Activated CD4-positive, alpha-beta T cell treated with anti-CD3 and anti-CD28 coated beads, Interleukin-2, amount 10 ng/mL, durations not matched to agents 7 days and 5 days (primary cell): ENCODE measurements at regions of chr6 and their contacts with region 1.

Region 1: DNA sequence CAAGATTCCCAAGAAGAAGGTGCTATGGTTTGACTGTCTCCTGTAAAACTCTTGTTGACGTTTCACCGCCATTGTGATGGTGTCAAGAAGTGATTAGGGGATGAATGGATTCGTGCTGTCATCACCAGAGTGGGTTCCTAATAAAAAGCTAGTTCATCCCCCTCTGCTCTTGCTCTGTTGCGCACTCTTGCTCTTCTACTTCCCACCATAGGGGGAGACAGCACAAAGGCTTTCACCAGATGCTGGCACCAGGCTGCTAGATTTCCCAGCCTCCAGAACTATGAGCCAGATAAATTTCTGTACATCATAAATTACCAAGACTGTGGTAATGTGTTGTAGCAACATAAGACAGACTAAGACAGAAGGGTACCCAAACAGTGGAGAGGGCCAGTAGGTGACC is 21.6 kb upstream of the CCDC28A start:
- DNase-seq: no peak
- H3K4me3 Mint-ChIP-seq: no peak overlapping the region
- H3K27ac Mint-ChIP-seq: no peak overlapping the region
- H3K4me1 Mint-ChIP-seq: no peaks in the 10 kb centered on the region
- H3K27me3 Mint-ChIP-seq: no peaks in the 10 kb centered on the region

Region 2: GRCh38 chr6:136866872-136867416 is 1885.1 kb before region 1 on chr6:
- CTCF ChIA-PET with region 1: interaction called, 10 read pairs
- POLR2A ChIA-PET with region 1: no interaction called
- DNase-seq: no peak
- H3K4me3 Mint-ChIP-seq: no peak overlapping the region
- H3K27ac Mint-ChIP-seq: no peak overlapping the region
- H3K4me1 Mint-ChIP-seq: no peaks in the 10 kb centered on the region
- H3K27me3 Mint-ChIP-seq: no peaks in the 10 kb centered on the region

Region 3: GRCh38 chr6:138622967-138623366 is 129.1 kb before region 1 on chr6:
- CTCF ChIA-PET with region 1: no interaction called
- POLR2A ChIA-PET with region 1: no interaction called
- DNase-seq: no peak
- H3K4me3 Mint-ChIP-seq: no peak overlapping the region
- H3K27ac Mint-ChIP-seq: no peak overlapping the region
- H3K4me1 Mint-ChIP-seq: no peaks in the 10 kb centered on the region
- H3K27me3 Mint-ChIP-seq: no peaks in the 10 kb centered on the region